ENCODE measurements at regions of chr9 and their contacts with region 1.

Region 1: DNA sequence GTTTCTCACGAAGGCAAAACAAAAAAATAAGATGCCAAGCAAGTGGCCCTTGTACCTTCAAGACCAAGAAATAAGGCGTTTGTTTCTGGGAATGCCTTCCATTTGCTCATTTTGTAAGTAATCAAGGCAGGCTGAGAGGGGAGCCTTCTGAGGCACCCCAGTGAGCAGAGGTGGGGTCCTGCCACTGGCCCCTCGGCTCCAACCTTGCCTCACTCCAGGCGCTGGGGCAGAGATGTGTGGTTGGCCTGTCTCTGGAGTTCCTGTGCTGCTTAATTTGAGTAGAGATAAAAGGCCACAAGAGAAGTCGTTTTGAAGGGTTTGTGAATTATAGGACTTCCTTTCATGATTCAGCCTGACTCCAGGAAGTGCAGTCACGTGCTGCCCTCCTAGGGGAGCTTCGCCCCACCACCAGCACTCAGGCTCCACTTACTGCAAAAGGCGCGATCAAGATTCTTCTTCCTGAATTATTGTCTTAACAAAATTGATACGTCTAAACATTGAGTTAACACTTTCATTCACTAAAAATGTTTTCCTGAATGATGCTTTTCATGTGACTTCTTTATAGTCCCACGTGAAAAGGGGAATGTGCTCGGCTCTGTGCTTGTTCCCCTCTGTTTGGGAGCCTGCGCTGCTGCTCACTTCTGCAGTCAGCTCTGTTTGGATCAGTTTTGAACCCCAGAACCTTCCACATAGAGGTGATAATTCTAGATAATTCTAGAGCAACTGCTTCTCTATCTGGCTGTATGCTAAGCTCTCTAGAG is 13.7 kb downstream of the SYK start:
- DNase-seq: peak; percentile 47
- ATAC-seq: peak; percentile 72
- H3K4me3 Mint-ChIP-seq: peak overlapping the region; percentile 73
- H3K27ac Mint-ChIP-seq: peak overlapping the region; percentile 95
- H3K4me1 Mint-ChIP-seq: peaks cover 94% of the 10 kb centered on the region
- H3K27me3 Mint-ChIP-seq: no peaks in the 10 kb centered on the region
- CTCF ChIP-seq: no peak

Region 2: DNA sequence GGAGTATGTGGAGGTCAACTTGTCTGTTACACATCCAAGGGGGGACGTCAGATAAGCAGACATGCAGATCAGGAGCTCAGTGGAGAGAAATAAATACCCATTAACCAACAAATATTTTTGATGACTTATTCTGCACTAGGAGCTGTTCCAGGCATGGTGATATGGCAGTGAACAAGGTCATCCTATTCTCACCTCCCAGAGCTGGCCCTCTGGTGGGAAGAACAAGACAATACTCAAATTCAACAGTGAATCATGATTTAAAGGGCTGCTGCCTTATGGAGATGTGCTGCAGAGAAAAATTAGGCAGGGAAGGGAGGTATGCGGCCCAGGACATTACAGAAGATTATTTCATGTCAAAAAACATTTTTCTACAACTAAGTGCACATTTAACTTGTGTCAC is 22.7 kb after region 1 on chr9:
- CTCF ChIA-PET with region 1: interaction called, 10 read pairs
- POLR2A ChIA-PET with region 1: interaction called, 11 read pairs
- intact Hi-C with region 1: no loop called
- DNase-seq: no peak
- ATAC-seq: no peak
- H3K4me3 Mint-ChIP-seq: peak overlapping the region; percentile 36
- H3K27ac Mint-ChIP-seq: no peak overlapping the region
- H3K4me1 Mint-ChIP-seq: peaks cover 69% of the 10 kb centered on the region
- H3K27me3 Mint-ChIP-seq: no peaks in the 10 kb centered on the region
- CTCF ChIP-seq: no peak

Measured in activated B cell treated with CpG ODN at 0.5 μM for 24 hours (primary cell).